Natural killer cell (primary cell): ENCODE measurements at regions of chr19 and their contacts with region 1.

Region 1: DNA sequence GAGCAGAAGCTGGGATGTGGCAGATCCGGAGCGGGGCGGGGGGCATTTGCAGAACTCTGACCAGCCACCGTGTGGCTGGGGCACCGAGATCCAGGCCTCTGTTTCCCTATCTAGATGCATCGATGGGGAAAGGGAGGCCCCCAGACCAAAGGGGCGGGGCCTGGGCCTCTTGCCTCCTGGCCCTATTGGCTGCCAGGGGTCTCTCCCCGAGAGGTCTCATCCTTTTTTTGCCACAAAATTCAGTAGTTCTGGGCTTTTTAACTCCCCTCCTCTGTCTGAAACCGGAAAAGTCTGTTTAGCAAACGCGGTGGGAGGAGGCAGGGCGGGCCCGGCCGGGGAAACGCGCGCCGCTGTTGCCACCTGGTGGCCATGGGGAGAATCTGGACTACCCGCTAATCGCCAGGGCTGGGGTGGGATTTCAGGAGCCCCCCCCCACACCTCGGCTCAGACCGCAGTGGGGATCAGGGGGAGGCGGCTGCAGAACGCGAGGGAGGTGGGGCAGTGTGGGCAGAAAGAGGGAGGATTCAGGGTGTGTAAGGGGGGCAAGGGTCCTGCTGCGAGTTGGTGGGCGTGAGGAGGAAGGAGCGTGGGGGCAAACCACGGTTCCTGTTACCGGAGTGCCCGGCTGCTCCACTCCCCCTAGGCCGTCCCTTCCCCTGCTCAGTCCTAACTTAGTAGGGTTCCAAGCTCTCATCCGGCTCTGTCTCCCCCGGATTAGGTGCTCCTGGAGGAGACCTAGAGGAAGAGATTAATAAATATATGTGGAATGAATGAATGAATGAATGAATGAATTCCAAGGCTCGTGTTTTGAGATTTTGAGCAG is 28.3 kb downstream of the IL12RB1 start:
- DNase-seq: peak; percentile 80 to 90
- ATAC-seq: peak; percentile 94 to 99 (median 97)
- H3K4me3 ChIP-seq: peak overlapping the region; percentile 11
- H3K4me3 Mint-ChIP-seq: peak overlapping the region; percentile 38
- H3K27ac ChIP-seq: peak overlapping the region; percentile 57
- H3K27ac Mint-ChIP-seq: peak overlapping the region; percentile 56 to 89
- H3K4me1 ChIP-seq: peaks cover 12% of the 10 kb centered on the region
- H3K4me1 Mint-ChIP-seq: peaks cover 9 to 11% of the 10 kb centered on the region in 2 donors
- H3K27me3 ChIP-seq: no peaks in the 10 kb centered on the region
- H3K27me3 Mint-ChIP-seq: no peaks in the 10 kb centered on the region
- CTCF ChIP-seq: peak; percentile 94

Region 2: DNA sequence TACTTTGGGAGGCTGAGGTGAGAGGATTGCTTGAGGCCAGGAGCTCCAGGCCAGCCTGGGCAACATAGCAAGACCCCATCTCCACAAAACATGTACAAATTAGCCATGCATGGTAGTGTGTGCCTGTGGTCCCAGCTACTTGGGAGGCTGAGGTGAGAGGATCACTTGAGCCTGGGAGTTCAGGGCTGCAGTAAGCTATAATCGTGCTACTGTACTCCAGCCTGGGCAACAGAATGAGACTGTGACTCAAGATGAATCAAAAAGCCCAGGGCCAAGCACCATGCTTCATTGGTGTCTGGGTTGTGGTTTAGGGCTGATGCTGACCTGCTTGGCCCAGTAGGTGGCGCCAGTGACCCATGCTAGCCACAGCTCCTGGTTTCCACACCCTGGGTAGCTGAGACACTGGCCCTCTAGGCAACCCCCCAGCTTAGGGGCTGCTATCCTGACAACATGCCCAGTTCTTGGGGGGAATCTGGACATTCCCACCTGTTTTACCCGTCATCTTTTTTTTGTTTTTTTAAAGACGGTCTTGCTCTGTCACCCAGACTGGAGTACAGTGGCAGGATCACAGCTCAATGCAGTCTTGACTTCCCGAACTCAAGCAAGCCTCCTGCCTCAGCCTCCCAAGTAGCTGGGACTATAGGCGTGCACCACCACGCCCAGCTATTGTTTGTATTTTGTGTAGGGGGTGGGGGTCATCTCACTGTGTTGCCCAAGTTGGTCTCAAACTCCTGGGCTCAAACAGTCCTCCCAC is 120.2 kb before region 1 on chr19:
- intact Hi-C with region 1: loop called (anchors 1 kb)
- DNase-seq: peak; percentile 85 to 92
- ATAC-seq: peak; percentile 94 to 98 (median 98)
- H3K4me3 ChIP-seq: no peak overlapping the region
- H3K4me3 Mint-ChIP-seq: no peak overlapping the region
- H3K27ac ChIP-seq: no peak overlapping the region
- H3K27ac Mint-ChIP-seq: no peak overlapping the region
- H3K4me1 ChIP-seq: peaks cover 10% of the 10 kb centered on the region
- H3K4me1 Mint-ChIP-seq: peaks cover 6% of the 10 kb centered on the region in 2 donors
- H3K27me3 ChIP-seq: no peaks in the 10 kb centered on the region
- H3K27me3 Mint-ChIP-seq: no peaks in the 10 kb centered on the region
- CTCF ChIP-seq: peak; percentile 81